HEK293 (cell line): ENCODE measurements at regions of chr17 and their contacts with region 1.

Region 1: DNA sequence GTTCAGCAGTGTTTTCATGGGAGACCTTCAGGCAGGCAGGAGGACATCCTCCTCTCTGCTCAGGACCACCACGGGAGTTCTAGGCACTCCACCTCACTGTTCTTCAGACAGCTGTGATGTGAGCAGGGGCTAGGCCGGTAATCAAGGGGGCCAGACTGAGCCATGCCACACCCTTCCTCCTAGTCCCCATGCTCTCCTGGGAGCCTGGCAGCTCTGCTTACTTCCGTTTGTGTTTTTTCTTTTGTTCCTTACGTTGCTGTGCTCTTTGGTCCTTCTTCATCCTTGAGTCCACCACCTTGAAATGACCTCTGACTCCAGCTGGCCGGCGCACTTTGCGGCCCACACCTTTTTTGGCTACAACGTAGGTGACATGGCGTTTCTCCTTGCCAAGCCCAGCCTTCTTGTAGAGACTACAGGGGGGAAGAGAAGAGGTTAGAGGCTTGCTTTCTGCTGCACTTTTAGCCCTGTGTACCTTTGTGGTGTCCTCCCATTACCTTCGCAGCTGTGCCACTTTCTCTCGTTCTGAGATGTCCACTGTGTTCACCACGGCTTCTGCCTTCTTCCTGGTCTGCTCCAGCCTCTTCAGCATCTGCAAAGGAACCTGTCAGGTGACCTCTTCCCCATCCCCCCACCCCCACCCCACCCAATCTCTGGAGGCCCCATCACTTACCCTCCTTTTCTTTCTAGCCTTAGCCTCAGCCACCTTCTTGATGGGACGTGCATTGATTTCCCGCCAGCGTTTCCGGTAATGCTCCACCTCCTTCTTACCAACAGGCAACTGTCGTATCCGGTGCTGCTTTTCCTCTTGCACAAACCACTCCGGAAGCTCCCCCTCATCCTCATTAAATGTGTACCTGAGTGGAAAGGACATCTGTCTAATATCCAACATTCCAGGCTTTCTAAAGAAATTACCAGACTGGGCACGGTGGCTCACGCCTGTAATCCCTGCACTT is 7.4 kb upstream of the PSMC5 start:
- H3K4me3 ChIP-seq: no peak overlapping the region
- H3K27ac ChIP-seq: no peak overlapping the region
- H3K4me1 ChIP-seq: no peaks in the 10 kb centered on the region
- CTCF ChIP-seq: no peak

Region 2: GRCh38 chr17:63516910-63517824 is 302.7 kb before region 1 on chr17:
- CTCF ChIA-PET with region 1: no interaction called
- POLR2A ChIA-PET with region 1: no interaction called
- H3K4me3 ChIP-seq: no peak overlapping the region
- H3K27ac ChIP-seq: no peak overlapping the region
- H3K4me1 ChIP-seq: no peaks in the 10 kb centered on the region
- CTCF ChIP-seq: no peak

Region 3: GRCh38 chr17:63834431-63835166 is 14.7 kb after region 1 on chr17:
- CTCF ChIA-PET with region 1: interaction called, 18 read pairs
- POLR2A ChIA-PET with region 1: interaction called, 4 read pairs
- H3K4me3 ChIP-seq: no peak overlapping the region
- H3K27ac ChIP-seq: 0 out of 2 replicates have a peak overlapping the region, but pooled peaks have one; percentile 1
- H3K4me1 ChIP-seq: peaks cover 7% of the 10 kb centered on the region
- CTCF ChIP-seq: peak; percentile 98